ENCODE measurements at regions of chr14 and their contacts with region 1.

Region 1: GRCh38 chr14:71331403-71331802 is 424.1 kb downstream of the PCNX1 start:
- DNase-seq: no peak
- H3K4me3 Mint-ChIP-seq: peak overlapping the region; percentile 42
- H3K27ac Mint-ChIP-seq: peak overlapping the region; percentile 89
- H3K4me1 Mint-ChIP-seq: peaks cover 71% of the 10 kb centered on the region
- H3K27me3 Mint-ChIP-seq: no peaks in the 10 kb centered on the region

Region 2: GRCh38 chr14:69532566-69533340 is 1798.7 kb before region 1 on chr14:
- intact Hi-C with region 1: no loop called
- DNase-seq: no peak
- H3K4me3 Mint-ChIP-seq: no peak overlapping the region
- H3K27ac Mint-ChIP-seq: no peak overlapping the region
- H3K4me1 Mint-ChIP-seq: no peaks in the 10 kb centered on the region
- H3K27me3 Mint-ChIP-seq: peaks cover 24% of the 10 kb centered on the region

Region 3: DNA sequence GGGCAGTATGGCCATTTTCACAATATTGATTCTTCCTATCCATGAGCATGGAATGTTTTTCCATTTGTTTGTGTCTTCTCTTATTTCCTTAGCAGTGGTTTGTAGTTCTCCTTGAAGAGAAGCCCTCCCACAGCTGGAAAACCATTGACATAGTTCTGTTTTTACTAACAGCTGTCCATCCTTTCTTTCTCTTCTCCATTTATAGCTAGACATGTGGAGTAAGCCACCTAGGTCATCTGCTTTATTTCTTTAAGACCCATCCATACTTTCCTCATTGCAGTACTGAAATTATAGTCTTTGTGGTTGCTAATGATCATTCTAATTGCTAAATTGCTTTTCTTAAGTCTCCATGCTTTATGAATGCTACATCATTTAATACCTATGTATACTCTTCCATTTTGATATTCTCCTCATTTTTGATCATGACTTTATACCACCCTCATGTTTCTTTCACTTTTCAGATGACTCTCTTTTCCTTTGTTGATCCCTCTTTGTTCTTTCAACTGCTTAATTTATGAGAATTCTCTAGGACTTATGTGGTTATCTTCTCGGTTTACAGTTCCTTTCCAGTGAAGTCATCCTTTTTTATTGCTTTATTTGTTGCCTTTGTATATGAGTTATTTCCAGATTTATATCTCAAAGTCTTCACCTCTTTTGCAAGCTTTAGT is 309.9 kb before region 1 on chr14:
- intact Hi-C with region 1: loop called (anchors 2 kb)
- DNase-seq: no peak
- H3K4me3 Mint-ChIP-seq: no peak overlapping the region
- H3K27ac Mint-ChIP-seq: peak overlapping the region; percentile 80
- H3K4me1 Mint-ChIP-seq: peaks cover 33% of the 10 kb centered on the region
- H3K27me3 Mint-ChIP-seq: no peaks in the 10 kb centered on the region

Region 4: DNA sequence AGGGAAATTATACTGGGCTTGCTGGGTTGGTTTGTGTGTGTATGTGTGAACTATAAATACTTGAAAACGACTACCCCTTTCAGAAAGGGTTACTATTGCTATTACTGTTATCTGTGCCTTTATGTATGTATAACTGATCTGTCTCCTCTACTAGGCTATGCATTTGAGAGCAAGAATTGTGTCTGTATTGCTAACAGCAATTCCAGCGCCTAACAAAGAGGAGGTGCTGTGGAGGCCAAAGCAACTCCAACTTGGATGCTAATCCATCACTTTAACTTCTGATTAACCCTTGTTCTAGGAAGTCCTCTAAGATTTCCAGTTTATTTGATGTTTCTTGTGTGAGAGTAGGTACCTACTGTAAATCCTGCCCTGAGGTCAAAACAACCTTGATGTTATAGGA is 110.3 kb before region 1 on chr14:
- intact Hi-C with region 1: loop called (anchors 1 kb)
- DNase-seq: no peak
- H3K4me3 Mint-ChIP-seq: no peak overlapping the region
- H3K27ac Mint-ChIP-seq: no peak overlapping the region
- H3K4me1 Mint-ChIP-seq: peaks cover 34% of the 10 kb centered on the region
- H3K27me3 Mint-ChIP-seq: peaks cover 3% of the 10 kb centered on the region

Region 5: DNA sequence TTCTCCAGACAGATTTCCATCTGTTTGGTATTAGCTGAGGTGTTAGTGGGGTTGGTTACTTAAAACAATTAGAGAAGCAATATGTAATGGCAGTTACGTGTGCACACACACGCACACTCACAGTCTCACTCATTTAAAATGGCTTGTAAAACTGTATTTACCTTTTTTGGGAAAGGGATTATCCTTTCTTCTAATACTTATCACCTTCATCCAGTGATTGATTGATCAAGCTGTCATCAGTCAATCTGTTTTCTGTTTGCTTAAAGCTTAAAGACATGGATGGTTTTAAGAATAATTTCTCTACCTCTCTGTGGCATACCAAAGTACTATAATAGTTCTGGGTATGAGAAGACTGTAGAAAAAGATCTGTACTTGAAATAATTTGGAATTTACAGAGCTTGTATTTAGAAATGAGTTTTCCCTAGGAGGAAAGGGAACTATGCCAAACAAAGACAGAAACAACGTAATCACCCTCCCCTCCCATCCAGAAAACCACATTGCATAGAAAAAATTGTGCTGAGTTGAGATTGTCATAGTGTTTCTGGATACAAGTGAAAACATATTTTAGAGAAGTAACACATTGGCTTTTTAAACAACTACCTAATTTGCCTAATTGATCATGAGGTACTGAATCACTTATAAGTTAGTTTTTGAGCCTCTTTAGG is 31.6 kb after region 1 on chr14:
- intact Hi-C with region 1: loop called (anchors 1 kb)
- DNase-seq: no peak
- H3K4me3 Mint-ChIP-seq: no peak overlapping the region
- H3K27ac Mint-ChIP-seq: no peak overlapping the region
- H3K4me1 Mint-ChIP-seq: peaks cover 50% of the 10 kb centered on the region
- H3K27me3 Mint-ChIP-seq: no peaks in the 10 kb centered on the region

Region 6: GRCh38 chr14:71403656-71404055 is 72.3 kb after region 1 on chr14:
- intact Hi-C with region 1: loop called (anchors 1 kb)
- DNase-seq: peak; percentile 15
- H3K4me3 Mint-ChIP-seq: no peak overlapping the region
- H3K27ac Mint-ChIP-seq: peak overlapping the region; percentile 67
- H3K4me1 Mint-ChIP-seq: peaks cover 56% of the 10 kb centered on the region
- H3K27me3 Mint-ChIP-seq: no peaks in the 10 kb centered on the region

Region 7: GRCh38 chr14:71452539-71452938 is 121.1 kb after region 1 on chr14:
- intact Hi-C with region 1: loop called (anchors 2 kb)
- DNase-seq: no peak
- H3K4me3 Mint-ChIP-seq: no peak overlapping the region
- H3K27ac Mint-ChIP-seq: peak overlapping the region; percentile 44
- H3K4me1 Mint-ChIP-seq: peaks cover 34% of the 10 kb centered on the region
- H3K27me3 Mint-ChIP-seq: no peaks in the 10 kb centered on the region

Region 8: GRCh38 chr14:71523630-71524319 is 192.4 kb after region 1 on chr14:
- intact Hi-C with region 1: loop called (anchors 1 kb)
- DNase-seq: no peak
- H3K4me3 Mint-ChIP-seq: no peak overlapping the region
- H3K27ac Mint-ChIP-seq: peak overlapping the region; percentile 32
- H3K4me1 Mint-ChIP-seq: peaks cover 21% of the 10 kb centered on the region
- H3K27me3 Mint-ChIP-seq: no peaks in the 10 kb centered on the region

Measured in activated T-helper 1 cell treated with anti-CD3 and anti-CD28 coated beads, Interleukin-12 subunit alpha, Interleukin-12 subunit beta, Interleukin-2, Interleukin-4 antibody, amounts not matched to agents 30 ng/mL and 10 ng/mL and 1 ng/mL, durations not matched to agents 14 hours and 24 hours and 36 hours (primary cell).